B cell (primary cell): ENCODE measurements at regions of chr17 and their contacts with region 1.

Region 1: DNA sequence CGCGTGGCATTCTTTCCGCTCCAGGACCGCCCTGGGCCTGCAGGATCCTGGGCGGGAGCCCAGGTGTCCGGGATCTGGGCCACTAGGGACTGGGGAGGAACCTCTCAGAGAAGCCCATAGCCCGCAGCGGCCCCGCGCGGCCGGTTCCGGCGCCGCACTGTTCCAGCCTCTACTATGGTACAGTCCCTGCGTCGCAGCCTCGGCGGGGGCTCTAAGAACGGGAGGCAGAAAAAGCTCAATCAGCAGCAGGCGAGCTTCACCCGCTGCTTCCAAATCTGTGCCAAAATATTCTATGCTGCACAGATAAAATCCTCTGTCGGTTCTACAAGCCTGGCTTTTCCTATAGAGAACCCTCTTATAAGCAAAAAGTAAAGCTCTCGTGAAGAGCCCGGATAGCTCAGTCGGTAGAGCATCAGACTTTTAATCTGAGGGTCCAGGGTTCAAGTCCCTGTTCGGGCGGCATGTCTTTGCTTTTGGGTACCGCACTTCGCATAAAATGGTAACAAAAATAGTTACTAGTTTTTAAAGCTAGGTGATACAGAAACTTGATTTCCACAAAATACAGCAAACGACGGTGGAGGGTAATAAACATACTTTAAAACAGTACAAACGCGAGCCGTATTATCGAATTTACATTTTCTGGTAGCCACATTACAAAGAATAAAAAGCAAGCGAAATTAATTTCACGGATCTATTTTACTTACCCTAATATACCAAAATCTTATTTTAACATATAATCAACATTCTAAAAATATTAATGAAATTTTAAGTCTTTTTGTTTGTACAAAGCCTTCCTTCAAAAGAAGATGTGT is 661 bp upstream of the ALOXE3 start:
- DNase-seq: peak; percentile 92
- ATAC-seq: peak; percentile 68
- H3K4me3 ChIP-seq: peak overlapping the region; percentile 61 to 85 (median 69)
- H3K4me3 Mint-ChIP-seq: peak overlapping the region; percentile 94
- H3K27ac ChIP-seq: peak overlapping the region; percentile 13 to 34
- H3K27ac Mint-ChIP-seq: peak overlapping the region; percentile 98
- H3K4me1 ChIP-seq: peaks cover 53 to 61% of the 10 kb centered on the region in 2 donors
- H3K4me1 Mint-ChIP-seq: peaks cover 56% of the 10 kb centered on the region
- H3K27me3 ChIP-seq: peaks cover 0 to 73% (median 49%) of the 10 kb centered on the region in 4 experiments
- H3K27me3 Mint-ChIP-seq: peaks cover 57% of the 10 kb centered on the region
- CTCF ChIP-seq: peak; percentile 92

Region 2: GRCh38 chr17:8079291-8080207 is 39.4 kb before region 1 on chr17:
- CTCF ChIA-PET with region 1: interaction called, 360 read pairs
- POLR2A ChIA-PET with region 1: interaction called, 6 read pairs
- intact Hi-C with region 1: loop called (anchors 1 kb)
- DNase-seq: peak; percentile 90
- ATAC-seq: peak; percentile 82
- H3K4me3 ChIP-seq: peak overlapping the region in 4 of 5 experiments; percentile 57 to 76 (median 70)
- H3K4me3 Mint-ChIP-seq: peak overlapping the region; percentile 96
- H3K27ac ChIP-seq: peak overlapping the region; percentile 48 to 75
- H3K27ac Mint-ChIP-seq: peak overlapping the region; percentile 92
- H3K4me1 ChIP-seq: peaks cover 9 to 15% of the 10 kb centered on the region in 2 donors
- H3K4me1 Mint-ChIP-seq: peaks cover 14% of the 10 kb centered on the region
- H3K27me3 ChIP-seq: peaks cover 0 to 19% (median 10%) of the 10 kb centered on the region in 4 experiments
- H3K27me3 Mint-ChIP-seq: peaks cover 6% of the 10 kb centered on the region
- CTCF ChIP-seq: peak; percentile 90

Region 3: DNA sequence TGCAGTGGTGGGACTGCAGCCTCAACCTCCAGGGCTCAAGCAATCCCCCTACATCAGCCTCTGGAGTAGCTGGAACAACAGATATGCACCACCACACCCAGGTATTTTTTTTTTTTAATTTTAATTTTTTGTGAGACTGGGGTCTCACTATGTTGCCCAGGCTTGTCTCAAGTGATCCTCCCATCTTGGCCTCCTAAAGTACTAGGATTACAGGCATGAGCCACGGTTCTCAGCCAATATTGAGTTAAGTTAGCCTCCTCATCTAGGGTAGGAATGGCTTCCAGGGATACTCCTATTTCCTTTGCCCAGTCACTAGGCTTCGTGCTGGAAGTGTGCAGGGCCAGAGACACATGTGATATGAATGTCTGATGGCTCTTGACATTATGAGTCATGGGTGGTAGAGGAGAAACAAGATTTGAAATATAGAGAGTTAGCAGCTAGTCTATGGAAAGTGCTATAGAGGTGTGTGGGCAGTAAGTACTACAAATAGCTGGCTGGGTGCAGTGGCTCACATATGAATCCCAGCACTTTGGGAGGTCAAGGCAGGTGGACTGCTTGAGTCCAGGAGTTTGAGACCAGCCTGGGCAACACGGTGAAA is 13.0 kb after region 1 on chr17:
- CTCF ChIA-PET with region 1: interaction called, 68 read pairs
- POLR2A ChIA-PET with region 1: no interaction called
- intact Hi-C with region 1: no loop called
- DNase-seq: no peak
- ATAC-seq: no peak
- H3K4me3 ChIP-seq: no peak overlapping the region
- H3K4me3 Mint-ChIP-seq: no peak overlapping the region
- H3K27ac ChIP-seq: no peak overlapping the region
- H3K27ac Mint-ChIP-seq: no peak overlapping the region
- H3K4me1 ChIP-seq: peaks cover 4 to 6% of the 10 kb centered on the region in 2 donors
- H3K4me1 Mint-ChIP-seq: peaks cover 4% of the 10 kb centered on the region
- H3K27me3 ChIP-seq: peaks cover 0 to 7% (median 0%) of the 10 kb centered on the region in 4 experiments
- H3K27me3 Mint-ChIP-seq: peaks cover 4% of the 10 kb centered on the region
- CTCF ChIP-seq: no peak

Region 4: GRCh38 chr17:8151123-8151640 is 32.2 kb after region 1 on chr17:
- CTCF ChIA-PET with region 1: interaction called, 44 read pairs
- POLR2A ChIA-PET with region 1: interaction called, 23 read pairs
- intact Hi-C with region 1: loop called (anchors 1 kb)
- DNase-seq: peak; percentile 95
- ATAC-seq: peak; percentile 60
- H3K4me3 ChIP-seq: peak overlapping the region; percentile 9 to 76 (median 69)
- H3K4me3 Mint-ChIP-seq: peak overlapping the region; percentile 94
- H3K27ac ChIP-seq: peak overlapping the region; percentile 63 to 80
- H3K27ac Mint-ChIP-seq: peak overlapping the region; percentile 87
- H3K4me1 ChIP-seq: peaks cover 50 to 64% of the 10 kb centered on the region in 2 donors
- H3K4me1 Mint-ChIP-seq: peaks cover 42% of the 10 kb centered on the region
- H3K27me3 ChIP-seq: no peaks in the 10 kb centered on the region
- H3K27me3 Mint-ChIP-seq: no peaks in the 10 kb centered on the region
- CTCF ChIP-seq: no peak

Region 5: GRCh38 chr17:8173056-8173870 is 54.3 kb after region 1 on chr17:
- CTCF ChIA-PET with region 1: interaction called, 7 read pairs
- POLR2A ChIA-PET with region 1: interaction called, 14 read pairs
- intact Hi-C with region 1: loop called (anchors 5 kb)
- DNase-seq: peak; percentile 95
- ATAC-seq: peak; percentile 83
- H3K4me3 ChIP-seq: peak overlapping the region; percentile 32 to 96 (median 63)
- H3K4me3 Mint-ChIP-seq: peak overlapping the region; percentile 94
- H3K27ac ChIP-seq: peak overlapping the region; percentile 95 to 99
- H3K27ac Mint-ChIP-seq: peak overlapping the region; percentile 100
- H3K4me1 ChIP-seq: peaks cover 24 to 38% of the 10 kb centered on the region in 2 donors
- H3K4me1 Mint-ChIP-seq: peaks cover 46% of the 10 kb centered on the region
- H3K27me3 ChIP-seq: no peaks in the 10 kb centered on the region
- H3K27me3 Mint-ChIP-seq: no peaks in the 10 kb centered on the region
- CTCF ChIP-seq: no peak

Region 6: GRCh38 chr17:8209909-8210760 is 91.2 kb after region 1 on chr17 and contains the start of gene AURKB:
- CTCF ChIA-PET with region 1: interaction called, 11 read pairs
- POLR2A ChIA-PET with region 1: no interaction called
- intact Hi-C with region 1: no loop called
- DNase-seq: peak; percentile 94
- ATAC-seq: peak; percentile 100
- H3K4me3 ChIP-seq: peak within 1 kb of the TSS; percentile 65 to 95 (median 76)
- H3K4me3 Mint-ChIP-seq: peak within 1 kb of the TSS; percentile 86
- H3K27ac ChIP-seq: peak within 1 kb of the TSS; percentile 59 to 66
- H3K27ac Mint-ChIP-seq: peak within 1 kb of the TSS; percentile 39
- H3K4me1 ChIP-seq: peaks cover 9 to 22% of the 10 kb centered on the region in 2 donors
- H3K4me1 Mint-ChIP-seq: peaks cover 15% of the 10 kb centered on the region
- H3K27me3 ChIP-seq: no peaks in the 10 kb centered on the region
- H3K27me3 Mint-ChIP-seq: no peaks in the 10 kb centered on the region
- CTCF ChIP-seq: no peak
- total RNA-seq, gene AURKB: 0.41 and 1.1 TPM in 2 replicates